ENCODE measurements at regions of chr5 and their contacts with region 1.

Region 1: GRCh38 chr5:155616779-155617392 is 603.3 kb downstream of the KIF4B start:
- DNase-seq: peak in 1 of 2 experiments; percentile 27
- H3K4me3 ChIP-seq: no peak overlapping the region
- H3K27ac ChIP-seq: no peak overlapping the region
- H3K4me1 ChIP-seq: no peaks in the 10 kb centered on the region
- H3K27me3 ChIP-seq: no peaks in the 10 kb centered on the region
- CTCF ChIP-seq: peak; percentile 72

Region 2: GRCh38 chr5:156815988-156816599 is 1199.2 kb after region 1 on chr5:
- CTCF ChIA-PET with region 1: no interaction called
- POLR2A ChIA-PET with region 1: no interaction called
- intact Hi-C with region 1: loop called (anchors 5 kb)
- DNase-seq: no peak
- H3K4me3 ChIP-seq: no peak overlapping the region
- H3K27ac ChIP-seq: no peak overlapping the region
- H3K4me1 ChIP-seq: no peaks in the 10 kb centered on the region
- H3K27me3 ChIP-seq: no peaks in the 10 kb centered on the region
- CTCF ChIP-seq: peak; percentile 44; the same call in 1 of the 2 replicates

Region 3: GRCh38 chr5:156942064-156942463 is 1325.2 kb after region 1 on chr5:
- CTCF ChIA-PET with region 1: interaction called, 10 read pairs
- POLR2A ChIA-PET with region 1: no interaction called
- intact Hi-C with region 1: no loop called
- DNase-seq: no peak
- H3K4me3 ChIP-seq: no peak overlapping the region
- H3K27ac ChIP-seq: no peak overlapping the region
- H3K4me1 ChIP-seq: no peaks in the 10 kb centered on the region
- H3K27me3 ChIP-seq: peaks cover 12% of the 10 kb centered on the region; the same call in 1 of the 2 replicates
- CTCF ChIP-seq: no peak

Measured in PC-9 (cell line).